Right ventricle myocardium inferior (tissue), 1 donor: ENCODE measurements at regions of chr3 and their contacts with region 1.

Region 1: GRCh38 chr3:111717601-111718000 is 122.5 kb upstream of the ZBED2 start:
- DNase-seq: peak; percentile 80
- ATAC-seq: peak; percentile 87

Region 2: GRCh38 chr3:111812701-111813100 is 95.1 kb after region 1 on chr3:
- intact Hi-C with region 1: no loop called
- DNase-seq: no peak
- ATAC-seq: no peak

Region 3: DNA sequence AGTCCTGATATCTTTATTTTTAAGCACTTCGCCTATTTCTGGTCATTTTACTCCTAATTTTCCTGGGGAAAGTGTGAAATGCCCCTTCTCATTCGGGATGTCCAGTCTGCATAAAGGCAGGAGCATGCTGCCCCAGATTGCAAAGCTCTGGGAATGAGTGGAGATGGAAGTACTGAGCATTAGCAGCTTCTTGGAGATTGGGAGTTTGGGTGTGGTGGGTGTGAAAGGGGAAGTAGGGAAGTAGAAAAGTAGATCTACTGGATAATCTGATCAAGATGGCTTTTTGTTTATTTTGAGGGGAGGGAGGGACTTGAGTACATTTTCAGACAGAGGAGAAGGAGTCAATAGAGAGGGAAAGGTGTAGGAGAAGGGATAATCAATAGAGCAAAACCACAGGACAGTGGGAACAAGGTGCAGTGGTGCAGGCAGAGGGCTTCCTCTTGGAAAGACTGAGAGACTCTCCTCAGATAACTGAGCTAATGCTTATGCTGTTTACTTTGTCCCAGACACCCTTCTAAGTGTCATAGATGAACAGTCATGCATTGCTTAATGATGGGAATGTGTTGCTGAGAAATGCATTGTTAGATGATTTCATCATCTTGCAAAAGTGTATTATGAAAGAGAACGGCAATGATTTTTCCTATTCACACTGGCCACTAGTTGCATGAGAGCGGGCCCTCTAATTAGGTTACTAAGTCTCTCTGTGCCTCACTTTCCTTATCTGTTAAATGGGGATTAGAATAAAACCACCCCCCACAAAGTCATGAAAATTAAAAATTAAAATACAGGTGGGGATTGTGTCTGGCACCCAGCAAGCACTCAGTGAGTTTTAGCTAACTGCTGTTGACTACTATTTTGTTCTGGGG is 187.0 kb after region 1 on chr3:
- intact Hi-C with region 1: loop called (anchors 1 kb)
- DNase-seq: no peak
- ATAC-seq: peak; percentile 88

Region 4: DNA sequence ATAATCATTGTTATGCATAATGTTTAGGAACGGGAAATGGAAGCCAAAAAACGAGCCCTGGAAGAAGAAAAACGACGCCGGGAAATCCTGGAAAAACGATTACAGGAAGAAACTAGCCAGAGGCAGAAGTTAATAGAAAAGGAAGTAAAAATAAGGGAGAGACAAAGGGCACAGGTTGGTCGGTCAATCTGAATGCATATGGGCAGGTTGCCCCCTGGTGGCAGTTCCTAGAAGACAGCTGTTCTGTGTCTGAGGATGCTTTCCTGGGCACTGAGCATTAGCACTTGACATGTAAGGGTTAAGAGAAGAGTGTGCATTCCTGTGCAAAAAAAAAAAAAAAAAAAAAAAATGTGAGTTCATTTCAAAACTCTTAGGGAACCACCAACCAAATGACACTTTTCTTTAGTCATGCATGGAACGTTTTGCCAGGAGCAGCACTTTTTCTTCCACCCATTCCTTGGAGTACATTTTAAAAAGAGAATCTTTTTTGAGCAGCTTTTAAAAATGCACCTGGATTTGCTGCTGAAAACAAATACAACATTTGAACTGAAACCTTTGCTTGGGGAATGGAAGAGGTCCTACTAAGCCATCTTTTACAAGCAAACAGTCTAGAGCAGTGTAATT is 250.2 kb after region 1 on chr3:
- intact Hi-C with region 1: loop called (anchors 1 kb)
- DNase-seq: peak; percentile 82
- ATAC-seq: peak; percentile 76